CD14-positive monocyte (primary cell): ENCODE measurements at regions of chr2 and their contacts with region 1.

Region 1: DNA sequence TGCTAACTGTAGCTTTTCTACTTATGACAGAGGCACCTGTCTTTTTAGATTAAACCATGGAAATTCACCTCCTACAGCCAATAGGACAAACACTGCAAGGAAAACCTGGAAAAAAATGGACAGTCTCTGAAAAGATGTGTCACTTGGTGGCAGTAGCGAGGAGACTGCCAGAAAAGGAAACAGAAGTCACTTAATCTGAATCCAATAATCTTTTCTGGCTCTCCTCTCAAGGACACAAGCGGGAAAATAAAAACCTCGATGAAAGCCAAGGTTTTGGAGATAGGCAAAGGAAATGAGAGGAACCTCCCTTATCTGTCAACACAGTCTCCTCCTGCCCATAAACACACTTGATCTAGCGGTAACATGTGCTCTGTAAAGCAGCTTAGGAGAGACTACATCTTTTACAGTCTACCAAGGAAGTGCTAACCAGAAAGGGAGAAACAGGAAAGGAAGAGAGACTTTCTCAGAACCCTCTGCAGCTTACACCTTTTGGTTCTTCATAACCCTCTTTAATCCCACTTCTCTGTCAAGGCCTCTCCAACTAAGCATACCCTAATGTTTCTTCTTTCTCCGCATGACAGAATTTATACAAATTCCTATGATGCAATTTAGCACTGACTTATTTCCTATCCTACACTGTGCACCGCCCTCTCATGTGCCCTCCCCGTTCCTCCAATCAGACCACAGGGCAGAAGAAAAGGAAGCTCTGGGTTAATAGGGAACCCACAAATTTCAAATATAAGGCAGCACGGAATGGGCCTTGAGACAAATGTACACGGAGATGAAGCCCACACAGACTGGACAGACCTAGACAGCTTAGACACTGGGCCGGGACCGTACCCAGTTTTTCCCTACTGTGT is 52.8 kb downstream of the CLASP1 start:
- DNase-seq: peak; percentile 80 to 89 (median 84)
- H3K4me3 ChIP-seq: peak overlapping the region; percentile 31 to 88 (median 82)
- H3K4me3 Mint-ChIP-seq: peak overlapping the region; percentile 74 to 90
- H3K27ac ChIP-seq: peak overlapping the region; percentile 55 to 97
- H3K27ac Mint-ChIP-seq: peak overlapping the region; percentile 91 to 95 (median 95)
- H3K4me1 ChIP-seq: peaks cover 20 to 27% of the 10 kb centered on the region in 2 donors
- H3K4me1 Mint-ChIP-seq: peaks cover 33% of the 10 kb centered on the region
- H3K27me3 ChIP-seq: no peaks in the 10 kb centered on the region
- H3K27me3 Mint-ChIP-seq: no peaks in the 10 kb centered on the region
- CTCF ChIP-seq: peak; percentile 54

Region 2: DNA sequence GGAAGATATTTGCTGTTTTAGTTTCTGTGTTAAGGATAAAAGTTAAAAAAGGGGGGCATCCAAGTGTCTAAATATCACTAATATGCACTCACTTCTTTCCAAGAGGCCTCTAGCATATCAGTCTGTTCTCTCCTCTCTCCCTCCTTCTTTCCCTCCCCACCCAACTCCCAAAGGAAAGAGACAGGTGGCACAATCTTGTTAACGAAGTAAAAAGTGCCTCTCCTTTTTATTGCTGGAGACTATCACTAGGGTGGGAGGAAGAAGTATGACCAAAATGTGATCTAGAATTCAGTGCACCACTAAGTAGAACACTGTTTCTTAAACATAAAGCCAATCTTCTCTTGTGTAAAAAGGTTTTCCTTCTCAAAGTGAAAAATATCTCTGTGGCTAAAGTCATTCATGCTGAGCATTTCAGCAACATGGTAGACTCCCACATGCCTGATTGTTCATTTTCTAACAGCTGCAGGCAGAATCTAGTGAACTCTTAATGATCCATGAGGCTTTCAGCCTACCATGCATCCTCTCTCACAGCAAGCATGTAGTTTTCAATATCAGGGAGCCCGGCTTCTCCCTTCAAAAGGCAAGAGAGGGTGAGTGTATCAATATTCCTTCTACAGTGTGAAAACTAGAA is 26.3 kb before region 1 on chr2:
- intact Hi-C with region 1: no loop called
- DNase-seq: no peak
- H3K4me3 ChIP-seq: no peak overlapping the region
- H3K4me3 Mint-ChIP-seq: no peak overlapping the region
- H3K27ac ChIP-seq: no peak overlapping the region
- H3K27ac Mint-ChIP-seq: no peak overlapping the region
- H3K4me1 ChIP-seq: no peaks in the 10 kb centered on the region
- H3K4me1 Mint-ChIP-seq: peaks cover 2% of the 10 kb centered on the region
- H3K27me3 ChIP-seq: no peaks in the 10 kb centered on the region
- H3K27me3 Mint-ChIP-seq: peaks cover 0 to 3% (median 1%) of the 10 kb centered on the region in 3 donors
- CTCF ChIP-seq: no peak

Region 3: GRCh38 chr2:121611730-121612705 is 15.6 kb after region 1 on chr2:
- intact Hi-C with region 1: loop called in 1 of 2 experiments (anchors 2 kb)
- DNase-seq: peak; percentile 85 to 98 (median 88)
- H3K4me3 ChIP-seq: peak overlapping the region in 1 of 3 experiments; percentile 18
- H3K4me3 Mint-ChIP-seq: no peak overlapping the region
- H3K27ac ChIP-seq: peak overlapping the region; percentile 58 to 80
- H3K27ac Mint-ChIP-seq: no peak overlapping the region
- H3K4me1 ChIP-seq: peaks cover 0 to 2% of the 10 kb centered on the region in 2 donors
- H3K4me1 Mint-ChIP-seq: no peaks in the 10 kb centered on the region
- H3K27me3 ChIP-seq: no peaks in the 10 kb centered on the region
- H3K27me3 Mint-ChIP-seq: peaks cover 0 to 3% (median 0%) of the 10 kb centered on the region in 3 donors
- CTCF ChIP-seq: no peak

Region 4: DNA sequence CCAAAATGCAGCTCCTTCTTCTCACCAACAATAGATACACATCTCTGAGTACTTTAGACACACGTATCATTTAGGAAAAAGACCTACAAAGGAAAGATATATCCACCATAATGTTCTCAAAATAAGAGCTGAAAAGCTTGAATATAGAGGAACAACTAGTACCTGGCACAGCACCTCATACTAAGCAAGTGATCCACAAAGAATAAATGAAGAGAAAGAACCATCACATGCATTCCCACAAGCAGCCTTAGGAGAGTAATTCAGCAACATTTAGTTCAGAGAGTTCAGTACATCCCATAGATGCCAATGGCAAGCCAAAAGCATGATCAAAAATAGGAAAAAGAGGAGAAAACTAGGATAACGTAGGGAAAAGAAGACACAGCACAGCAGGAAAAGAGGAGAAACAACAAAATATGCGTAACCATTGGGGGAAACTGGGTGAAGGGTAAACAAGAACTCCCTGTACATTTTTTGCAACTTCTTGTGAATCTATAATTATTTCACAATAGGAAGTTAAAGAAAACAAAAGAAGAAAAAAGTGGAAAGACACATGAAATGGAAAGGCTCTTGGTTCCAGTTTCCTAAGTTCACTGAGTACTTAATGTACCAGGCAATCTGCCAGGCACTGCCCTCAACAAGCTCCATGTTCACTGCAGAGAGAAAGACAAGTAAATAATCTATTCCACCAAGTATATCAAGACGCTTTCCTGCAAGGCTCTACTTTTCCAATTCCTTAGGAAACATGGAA is 30.5 kb after region 1 on chr2:
- intact Hi-C with region 1: no loop called
- DNase-seq: no peak
- H3K4me3 ChIP-seq: no peak overlapping the region
- H3K4me3 Mint-ChIP-seq: no peak overlapping the region
- H3K27ac ChIP-seq: peak overlapping the region in 1 of 2 donors; percentile 28
- H3K27ac Mint-ChIP-seq: peak overlapping the region in 6 of 7 donors; percentile 2 to 73 (median 44)
- H3K4me1 ChIP-seq: peaks cover 7 to 11% of the 10 kb centered on the region in 2 donors
- H3K4me1 Mint-ChIP-seq: peaks cover 16% of the 10 kb centered on the region
- H3K27me3 ChIP-seq: no peaks in the 10 kb centered on the region
- H3K27me3 Mint-ChIP-seq: peaks cover 0 to 1% (median 0%) of the 10 kb centered on the region in 3 donors
- CTCF ChIP-seq: no peak

Region 5: DNA sequence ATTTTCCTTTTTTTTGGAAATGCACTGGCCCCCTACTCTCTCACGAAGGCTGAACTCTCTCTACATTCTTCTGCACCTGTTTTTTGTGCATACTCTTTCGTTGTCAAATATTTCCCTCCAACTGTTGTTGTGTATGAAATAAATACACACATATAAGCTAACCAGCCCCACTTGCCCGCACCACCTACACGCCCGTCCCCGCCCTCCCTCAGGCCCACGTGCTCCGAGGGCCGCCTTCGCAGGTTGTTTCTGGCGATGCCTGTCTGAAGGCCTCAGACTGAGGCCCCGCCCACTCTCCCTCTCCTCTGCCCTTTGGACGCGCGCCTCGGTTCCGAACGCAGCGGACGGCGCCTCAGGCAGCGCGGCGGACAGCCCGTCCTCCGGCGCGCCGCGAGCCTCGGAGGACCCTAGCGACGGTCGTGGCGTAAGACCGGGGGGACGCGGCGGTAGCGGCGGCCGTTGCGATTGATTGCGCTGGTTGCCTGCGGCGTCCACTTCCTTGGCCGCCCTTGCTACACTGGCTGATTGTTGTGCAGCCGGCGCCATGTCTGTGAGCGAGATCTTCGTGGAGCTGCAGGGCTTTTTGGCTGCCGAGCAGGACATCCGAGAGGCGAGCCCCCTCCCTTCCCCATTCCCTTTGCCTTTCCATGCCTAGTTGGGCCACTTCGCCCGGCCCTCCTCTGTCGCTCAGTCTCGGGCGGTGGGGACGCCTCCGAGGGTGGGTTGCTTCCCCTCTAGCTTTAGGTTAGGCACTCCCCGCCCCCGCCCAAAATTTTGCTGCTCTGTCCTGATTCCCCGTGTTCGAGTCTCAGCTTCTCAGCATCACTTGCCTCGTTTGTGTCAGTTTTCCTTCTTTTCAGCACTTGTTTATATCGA is 159.0 kb after region 1 on chr2 and contains the start of gene TSN:
- intact Hi-C with region 1: no loop called
- DNase-seq: peak; percentile 95 to 99 (median 97)
- H3K4me3 ChIP-seq: peak within 1 kb of the TSS; percentile 88 to 97 (median 97)
- H3K4me3 Mint-ChIP-seq: peak within 1 kb of the TSS; percentile 94 to 95
- H3K27ac ChIP-seq: peak within 1 kb of the TSS; percentile 88 to 95
- H3K27ac Mint-ChIP-seq: peak within 1 kb of the TSS; percentile 90 to 96 (median 93)
- H3K4me1 ChIP-seq: peaks cover 19 to 26% of the 10 kb centered on the region in 2 donors
- H3K4me1 Mint-ChIP-seq: peaks cover 18% of the 10 kb centered on the region
- H3K27me3 ChIP-seq: no peaks in the 10 kb centered on the region
- H3K27me3 Mint-ChIP-seq: peaks cover 0 to 2% (median 0%) of the 10 kb centered on the region in 3 donors
- CTCF ChIP-seq: no peak
- polyA plus RNA-seq, gene TSN: 12.2 to 66.5 (median 65.5) TPM